ENCODE measurements at regions of chr13 and their contacts with region 1.

Region 1: DNA sequence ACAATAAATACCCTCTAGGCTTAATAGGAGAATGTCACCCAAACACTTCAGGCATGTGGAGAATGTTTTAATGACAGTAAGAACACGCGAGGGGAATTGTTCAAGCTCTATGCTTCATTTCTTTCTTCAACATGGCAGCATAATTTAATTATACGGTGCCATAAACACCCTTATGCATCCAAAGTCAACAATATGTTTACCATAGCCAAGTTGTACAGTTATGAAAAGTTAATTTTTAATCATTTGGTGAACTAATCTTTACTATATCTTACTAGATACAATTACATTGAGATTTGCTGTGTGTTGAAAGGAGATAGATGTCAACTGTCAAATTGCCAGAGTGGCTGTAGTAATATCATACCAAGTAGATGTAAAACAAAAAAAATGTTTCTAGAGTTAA is 185.9 kb upstream of the NBEA start:
- DNase-seq: no peak
- ATAC-seq: no peak
- H3K4me3 ChIP-seq: no peak overlapping the region
- H3K27ac ChIP-seq: no peak overlapping the region
- H3K4me1 ChIP-seq: no peaks in the 10 kb centered on the region
- H3K27me3 ChIP-seq: no peaks in the 10 kb centered on the region
- CTCF ChIP-seq: no peak

Region 2: DNA sequence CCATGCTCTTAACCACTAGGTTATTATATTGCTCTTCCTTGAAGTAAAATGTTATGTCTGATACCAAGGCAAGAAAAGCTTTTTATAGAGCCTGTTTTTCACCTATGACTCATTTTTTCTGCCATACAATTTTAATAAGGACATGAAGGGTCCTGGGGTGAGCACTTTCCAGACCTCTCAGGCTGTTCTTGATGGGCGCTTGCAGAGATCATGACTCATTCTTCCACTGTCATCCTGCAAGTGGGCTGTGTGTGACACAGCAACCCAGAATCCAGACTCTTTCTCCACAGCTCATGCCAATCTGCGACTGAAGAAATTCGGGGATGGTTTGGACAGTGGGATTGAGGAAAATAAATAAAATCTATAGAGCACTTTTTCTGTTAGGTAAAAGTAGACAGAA is 320.8 kb before region 1 on chr13:
- intact Hi-C with region 1: no loop called
- DNase-seq: no peak
- ATAC-seq: peak in 3 of 8 donors; percentile 42 to 72 (median 69)
- H3K4me3 ChIP-seq: no peak overlapping the region
- H3K27ac ChIP-seq: no peak overlapping the region
- H3K4me1 ChIP-seq: no peaks in the 10 kb centered on the region
- H3K27me3 ChIP-seq: no peaks in the 10 kb centered on the region
- CTCF ChIP-seq: no peak

Region 3: GRCh38 chr13:34779171-34779570 is 23.0 kb after region 1 on chr13:
- intact Hi-C with region 1: loop called in 1 of 10 experiments (anchors 1 kb)
- DNase-seq: no peak
- ATAC-seq: no peak
- H3K4me3 ChIP-seq: no peak overlapping the region
- H3K27ac ChIP-seq: no peak overlapping the region
- H3K4me1 ChIP-seq: no peaks in the 10 kb centered on the region
- H3K27me3 ChIP-seq: no peaks in the 10 kb centered on the region
- CTCF ChIP-seq: peak in 3 of 9 donors; percentile 21 to 29 (median 24)